GM12878 (cell line): ENCODE measurements at regions of chr19 and their contacts with region 1.

Region 1: DNA sequence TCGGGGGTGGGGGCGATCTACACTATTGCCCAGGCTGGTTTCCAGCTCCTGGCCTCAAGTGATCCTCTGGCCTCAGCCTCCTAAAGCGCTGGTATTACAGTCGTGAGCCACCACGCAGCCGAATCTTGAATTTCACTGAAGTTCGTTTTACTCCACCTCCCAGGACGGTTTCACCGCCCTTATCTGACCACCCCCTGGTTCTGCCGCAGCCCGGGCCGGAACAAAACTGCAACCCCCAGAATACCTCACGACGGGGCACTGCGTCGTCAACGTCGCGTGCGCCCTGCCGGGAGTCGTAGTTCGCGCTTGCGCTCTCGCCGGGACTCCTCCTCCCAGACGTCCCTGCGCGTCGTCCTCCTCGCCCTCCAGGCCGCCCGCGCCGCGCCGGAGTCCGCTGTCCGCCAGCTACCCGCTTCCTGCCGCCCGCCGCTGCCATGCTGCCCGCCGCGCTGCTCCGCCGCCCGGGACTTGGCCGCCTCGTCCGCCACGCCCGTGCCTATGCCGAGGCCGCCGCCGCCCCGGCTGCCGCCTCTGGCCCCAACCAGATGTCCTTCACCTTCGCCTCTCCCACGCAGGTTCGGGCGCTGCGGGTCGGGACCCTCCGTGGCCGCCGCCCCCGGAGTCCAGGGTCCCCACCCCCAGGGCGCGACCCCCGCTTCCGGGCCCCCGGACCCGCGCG is at the start of gene ATP5F1D:
- DNase-seq: peak; percentile 80
- ATAC-seq: peak; percentile 80
- H3K4me3 ChIP-seq: peak within 1 kb of the TSS; percentile 80
- H3K27ac ChIP-seq: peak within 1 kb of the TSS; percentile 73
- H3K4me1 ChIP-seq: peaks cover 24% of the 10 kb centered on the region
- H3K27me3 ChIP-seq: peaks cover 0 to 7% of the 10 kb centered on the region in 2 experiments; a peak in 3 of 4 replicates
- CTCF ChIP-seq: no peak
- EP300 ChIP-seq: no peak
- POLR2A ChIP-seq: peak; percentile 77
- RAD21 ChIP-seq: no peak
- polyA plus RNA-seq, gene ATP5F1D: 7.2 to 45.0 TPM

Region 2: DNA sequence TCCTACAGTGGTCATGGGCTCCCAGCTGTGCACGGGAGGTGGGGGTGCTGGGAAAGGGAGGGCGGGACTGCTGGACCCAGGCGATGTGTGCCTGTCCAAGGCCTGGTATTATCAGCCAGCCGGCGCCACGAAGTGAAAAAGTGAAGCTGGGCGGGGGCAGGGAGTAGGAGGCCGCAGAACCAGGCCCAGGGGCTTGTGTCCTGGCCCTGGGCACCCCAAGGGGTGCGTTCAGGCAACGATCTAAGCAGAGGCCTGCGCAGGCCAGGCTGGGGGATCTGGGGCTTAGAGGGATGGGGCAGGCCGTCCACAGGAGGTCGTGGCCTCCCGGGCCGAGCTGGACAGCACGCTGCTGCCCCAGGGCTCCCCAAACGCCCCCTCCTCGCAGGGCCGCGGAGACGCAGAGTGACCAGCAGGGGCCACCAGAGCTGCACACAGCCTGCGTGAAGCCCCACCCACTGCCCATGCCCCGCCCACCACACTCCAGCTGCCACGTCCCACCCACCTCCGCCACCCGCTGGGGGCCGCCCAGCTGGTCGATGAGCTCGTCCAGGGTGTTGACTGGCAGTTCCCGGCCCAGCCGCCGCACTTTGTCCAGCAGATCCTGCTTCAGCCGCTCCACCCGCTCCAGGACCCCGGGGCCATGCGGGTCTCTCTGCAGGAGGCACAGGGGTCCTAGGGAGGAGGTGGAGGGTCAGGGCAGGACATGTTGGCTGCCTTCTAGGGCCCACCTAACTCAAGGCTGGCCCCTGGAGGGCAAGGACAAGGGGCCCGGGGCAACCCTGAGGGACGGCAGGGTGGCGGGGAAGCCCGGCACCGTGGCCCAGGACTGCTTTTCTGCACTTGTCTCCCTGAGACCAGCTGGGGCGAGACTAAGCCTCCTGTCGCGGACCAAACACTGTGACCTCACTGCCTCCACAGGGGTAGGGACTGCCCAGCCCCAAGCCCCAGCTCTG is 128.2 kb before region 1 on chr19:
- CTCF ChIA-PET with region 1: interaction called, 10 read pairs
- POLR2A ChIA-PET with region 1: no interaction called
- RAD21 ChIA-PET with region 1: interaction called, 5 read pairs
- SMC1A ChIA-PET with region 1: interaction called, 7 read pairs
- in situ Hi-C with region 1: no loop called
- intact Hi-C with region 1: no loop called
- DNase-seq: peak; percentile 24
- ATAC-seq: peak; percentile 93
- H3K4me3 ChIP-seq: no peak overlapping the region
- H3K27ac ChIP-seq: no peak overlapping the region
- H3K4me1 ChIP-seq: 0 out of 2 replicates have a peak, but pooled peaks cover 3% of the 10 kb centered on the region
- H3K27me3 ChIP-seq: no peaks in the 10 kb centered on the region
- CTCF ChIP-seq: peak; percentile 62 to 90 (median 90)
- EP300 ChIP-seq: no peak
- POLR2A ChIP-seq: peak; percentile 61
- RAD21 ChIP-seq: peak; percentile 69

Region 3: GRCh38 chr19:1269065-1269477 is 27.5 kb after region 1 on chr19 and contains the start of gene CIRBP:
- CTCF ChIA-PET with region 1: interaction called, 363 read pairs
- POLR2A ChIA-PET with region 1: interaction called, 184 read pairs
- RAD21 ChIA-PET with region 1: interaction called, 336 read pairs
- SMC1A ChIA-PET with region 1: interaction called, 172 read pairs
- in situ Hi-C with region 1: no loop called
- intact Hi-C with region 1: loop called (anchors 1 kb)
- DNase-seq: peak; percentile 86
- ATAC-seq: peak; percentile 70
- H3K4me3 ChIP-seq: peak within 1 kb of the TSS; percentile 98
- H3K27ac ChIP-seq: peak within 1 kb of the TSS; percentile 98
- H3K4me1 ChIP-seq: peaks cover 47% of the 10 kb centered on the region
- H3K27me3 ChIP-seq: no peaks in the 10 kb centered on the region
- CTCF ChIP-seq: no peak
- EP300 ChIP-seq: no peak
- POLR2A ChIP-seq: no peak
- RAD21 ChIP-seq: no peak
- polyA plus RNA-seq, gene CIRBP: 27.6 to 52.4 TPM

Region 4: DNA sequence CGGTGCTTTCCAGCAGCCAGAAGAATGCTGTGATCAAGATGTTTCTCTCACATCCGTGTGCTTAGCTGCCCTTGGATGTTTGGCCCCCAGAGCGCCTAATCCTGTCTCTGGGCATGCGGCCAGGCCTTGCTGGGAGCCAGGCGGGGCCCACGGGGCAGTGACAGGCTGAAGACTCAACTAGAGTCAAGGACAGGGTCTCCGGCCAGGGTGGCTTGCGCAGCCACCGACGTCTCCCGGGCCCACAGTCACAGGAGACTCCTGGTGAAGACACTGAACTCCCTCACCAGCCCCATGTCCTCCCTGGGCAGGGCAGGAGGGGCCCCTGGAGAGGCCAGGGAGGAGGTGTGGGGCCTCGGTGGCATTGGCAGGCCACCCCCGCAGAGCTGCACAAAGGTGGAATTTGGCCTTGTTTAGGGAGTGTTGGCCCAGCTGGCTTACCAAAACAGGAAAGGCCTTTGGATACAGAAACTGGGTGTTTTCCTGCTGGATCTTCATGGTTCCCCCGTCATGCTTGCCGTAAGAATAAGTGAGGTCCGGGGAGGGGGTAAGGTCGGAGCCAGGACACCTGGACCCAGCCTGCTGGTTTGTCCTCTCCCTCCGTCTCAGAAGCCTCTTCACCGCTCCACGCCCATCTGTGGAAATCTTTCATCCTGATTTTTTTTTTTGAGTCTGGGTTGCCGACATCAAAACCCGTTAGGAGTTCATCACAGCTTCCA is 132.1 kb after region 1 on chr19:
- CTCF ChIA-PET with region 1: interaction called, 23 read pairs
- POLR2A ChIA-PET with region 1: interaction called, 4 read pairs
- RAD21 ChIA-PET with region 1: interaction called, 23 read pairs
- SMC1A ChIA-PET with region 1: interaction called, 4 read pairs
- in situ Hi-C with region 1: no loop called
- intact Hi-C with region 1: no loop called
- DNase-seq: no peak
- ATAC-seq: no peak
- H3K4me3 ChIP-seq: no peak overlapping the region
- H3K27ac ChIP-seq: no peak overlapping the region
- H3K4me1 ChIP-seq: no peaks in the 10 kb centered on the region
- H3K27me3 ChIP-seq: no peaks in the 10 kb centered on the region
- CTCF ChIP-seq: no peak
- EP300 ChIP-seq: no peak
- POLR2A ChIP-seq: no peak
- RAD21 ChIP-seq: no peak

Region 5: DNA sequence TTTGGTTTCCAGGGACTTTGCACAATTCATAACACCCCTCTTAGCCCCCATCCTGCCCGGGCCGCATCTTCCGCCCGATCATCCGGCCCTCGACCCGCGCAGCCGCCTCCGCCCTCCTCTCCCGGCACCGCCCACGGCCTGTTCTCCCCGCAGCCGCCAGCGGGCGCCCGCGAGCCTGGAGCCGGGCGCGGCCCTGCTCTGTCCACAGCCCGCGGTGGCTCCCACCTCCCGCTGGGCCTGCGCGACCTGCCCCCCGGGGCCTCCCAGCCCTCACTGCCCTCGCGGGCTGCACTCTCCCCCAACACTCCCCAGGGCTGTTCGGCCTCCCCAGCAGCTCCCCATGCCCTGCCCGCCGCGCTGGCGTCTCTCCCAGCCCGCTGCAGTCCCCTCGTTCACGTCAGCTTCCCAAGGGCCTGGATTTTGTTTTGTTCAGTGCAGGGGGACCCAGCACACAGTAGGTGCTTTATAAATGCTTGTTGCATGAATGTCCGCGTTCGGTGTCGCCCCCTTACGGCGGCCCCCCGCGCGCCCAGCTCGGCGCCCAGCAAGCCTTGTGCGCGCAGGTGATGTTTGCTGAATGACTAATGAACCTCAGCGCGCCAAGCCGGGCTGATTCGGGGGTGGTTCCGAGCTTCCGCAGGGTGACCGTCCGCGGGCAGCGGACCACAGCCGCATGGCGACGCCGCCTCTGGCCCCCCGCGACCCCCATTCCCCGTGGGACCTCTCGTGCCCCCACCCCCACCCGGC is 203.8 kb after region 1 on chr19:
- CTCF ChIA-PET with region 1: interaction called, 11 read pairs
- POLR2A ChIA-PET with region 1: no interaction called
- RAD21 ChIA-PET with region 1: interaction called, 4 read pairs
- SMC1A ChIA-PET with region 1: no interaction called
- in situ Hi-C with region 1: no loop called
- intact Hi-C with region 1: no loop called
- DNase-seq: no peak
- ATAC-seq: peak; percentile 94
- H3K4me3 ChIP-seq: peak overlapping the region; percentile 47
- H3K27ac ChIP-seq: no peak overlapping the region
- H3K4me1 ChIP-seq: peaks cover 7% of the 10 kb centered on the region
- H3K27me3 ChIP-seq: peaks cover 4 to 9% of the 10 kb centered on the region in 2 experiments; a peak in 3 of 4 replicates
- CTCF ChIP-seq: peak; percentile 82 to 94 (median 94)
- EP300 ChIP-seq: no peak
- POLR2A ChIP-seq: no peak; the same call in 1 of the 2 replicates
- RAD21 ChIP-seq: peak; percentile 55